ENCODE measurements at regions of chr7 and their contacts with region 1.

Region 1: DNA sequence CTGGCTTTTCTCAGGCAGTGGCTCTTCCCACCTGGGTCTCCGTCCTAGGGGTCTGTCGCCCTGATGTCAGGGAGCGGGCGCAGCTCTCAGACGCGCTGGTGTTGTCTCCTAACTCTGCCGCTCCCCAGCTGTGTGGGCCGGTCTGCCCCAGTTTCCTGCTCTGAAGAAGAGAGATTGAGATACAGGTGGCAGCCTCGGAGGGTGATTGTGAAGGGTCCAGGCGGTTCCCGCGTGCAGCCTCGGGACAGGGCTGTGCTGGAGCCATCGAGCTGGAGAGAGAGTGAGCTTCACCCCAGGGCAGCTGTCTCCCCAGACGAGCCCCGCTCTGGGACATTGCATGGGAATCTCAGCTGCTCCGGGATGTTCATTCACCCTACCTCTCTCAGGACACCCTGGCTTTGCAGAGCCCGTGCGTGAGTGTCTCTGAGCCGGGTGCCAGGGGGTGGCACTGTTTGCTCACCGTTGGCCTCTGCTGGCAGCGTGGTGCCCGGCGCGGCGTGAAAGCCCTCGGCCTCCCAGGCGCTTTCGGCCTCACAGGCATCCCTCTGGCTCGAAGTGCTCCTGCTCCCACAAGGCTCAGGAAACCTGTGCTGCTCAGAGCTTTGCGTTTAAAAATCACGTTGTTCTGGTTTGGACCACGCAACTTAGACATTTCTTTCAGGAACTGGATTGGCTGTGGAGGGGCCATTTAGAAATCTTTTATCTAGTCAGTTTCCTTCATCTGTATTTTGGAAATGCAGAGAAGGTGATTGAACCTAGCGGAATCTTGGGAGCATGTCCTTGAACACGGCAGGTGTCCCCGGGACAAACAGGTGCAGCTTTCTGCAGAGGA is 33.8 kb upstream of the ZFAND2A start:
- DNase-seq: peak; percentile 39
- H3K4me3 ChIP-seq: no peak overlapping the region
- H3K27ac ChIP-seq: no peak overlapping the region
- H3K4me1 ChIP-seq: no peaks in the 10 kb centered on the region
- H3K27me3 ChIP-seq: no peaks in the 10 kb centered on the region
- CTCF ChIP-seq: peak; percentile 48 to 85

Region 2: DNA sequence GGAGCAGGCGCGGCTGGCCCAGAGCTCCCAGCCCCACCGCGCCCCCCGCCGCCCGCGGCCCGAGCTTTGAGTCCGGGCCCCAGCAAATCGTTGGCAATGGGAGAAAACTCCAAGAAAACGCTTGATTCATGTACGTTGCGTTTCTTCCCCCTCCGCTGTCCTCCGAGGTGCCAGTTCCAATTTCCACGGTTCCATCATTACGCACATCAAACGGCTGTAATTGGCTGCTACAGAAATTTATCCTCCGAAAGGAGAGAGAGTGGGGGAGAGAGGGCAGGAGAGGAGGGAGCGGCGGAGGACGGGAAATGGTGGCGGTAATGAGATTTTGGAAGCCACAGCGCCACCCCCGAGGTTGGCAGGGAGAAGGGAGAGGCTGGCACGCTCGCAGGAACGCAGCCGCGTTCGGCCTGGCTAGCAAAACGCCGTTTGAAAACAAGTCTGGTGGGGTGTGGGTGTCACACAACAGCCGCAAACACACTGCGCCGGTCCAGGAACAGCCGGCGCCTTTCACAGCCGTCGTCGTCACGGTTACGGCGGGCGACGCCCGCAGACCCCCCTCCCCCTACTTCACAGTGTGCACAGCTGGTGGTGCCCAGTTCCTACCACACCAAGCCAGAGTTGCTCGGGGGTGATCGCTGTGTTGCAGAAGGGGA is 96.3 kb after region 1 on chr7:
- CTCF ChIA-PET with region 1: no interaction called
- dilution Hi-C with region 1: no loop called
- in situ Hi-C with region 1: no loop called
- intact Hi-C with region 1: no loop called
- DNase-seq: no peak
- H3K4me3 ChIP-seq: peak overlapping the region in 2 of 3 experiments; percentile 17 to 21
- H3K27ac ChIP-seq: no peak overlapping the region
- H3K4me1 ChIP-seq: peaks cover 4% of the 10 kb centered on the region
- H3K27me3 ChIP-seq: peaks cover 6% of the 10 kb centered on the region
- CTCF ChIP-seq: peak in 1 of 2 donors; percentile 8

Region 3: DNA sequence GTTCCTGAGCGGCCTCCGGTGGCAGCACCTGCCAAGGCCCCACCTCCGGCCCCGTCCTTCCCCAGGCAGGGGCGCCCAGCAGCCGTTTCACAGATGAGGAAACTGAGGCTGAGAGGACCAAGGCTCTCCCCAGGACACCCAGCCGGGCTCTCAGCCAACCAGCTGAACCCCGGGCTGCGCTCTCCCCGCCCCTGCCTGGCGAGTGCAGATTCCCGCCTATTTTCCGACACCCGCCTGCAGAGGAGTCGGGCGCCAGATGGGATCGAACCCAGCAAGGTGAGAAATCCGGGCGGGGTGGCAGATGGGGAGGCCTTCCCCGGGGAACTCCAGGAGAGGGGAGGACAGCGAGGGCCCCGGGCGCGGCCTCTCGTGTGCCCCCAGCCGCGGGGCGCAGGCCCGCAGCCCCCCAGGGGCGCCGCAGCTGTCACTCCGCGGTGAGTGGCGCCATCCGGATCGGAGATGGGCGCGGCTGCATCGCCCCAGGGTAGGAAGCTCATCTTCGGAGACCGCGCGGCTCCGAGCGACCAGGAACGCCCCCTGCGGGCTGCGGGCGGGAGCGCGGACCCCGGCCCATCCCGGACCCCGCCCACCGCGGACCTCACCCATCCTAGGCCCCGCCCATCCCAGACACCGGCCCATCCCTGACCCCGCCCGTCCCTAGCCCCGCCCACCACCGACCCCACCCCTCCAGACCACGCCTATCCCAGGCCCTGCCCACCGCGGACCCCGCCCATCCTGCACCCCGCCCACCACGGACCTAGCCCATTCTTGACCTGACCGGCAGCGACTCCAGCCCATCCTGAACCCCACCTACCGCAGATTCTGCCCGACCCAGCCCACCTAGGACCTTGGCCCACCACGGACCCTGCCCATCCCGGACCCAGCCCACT is 175.1 kb after region 1 on chr7:
- CTCF ChIA-PET with region 1: no interaction called
- dilution Hi-C with region 1: no loop called
- in situ Hi-C with region 1: no loop called
- intact Hi-C with region 1: no loop called
- DNase-seq: no peak
- H3K4me3 ChIP-seq: no peak overlapping the region
- H3K27ac ChIP-seq: no peak overlapping the region
- H3K4me1 ChIP-seq: peaks cover 3% of the 10 kb centered on the region
- H3K27me3 ChIP-seq: peaks cover 11% of the 10 kb centered on the region
- CTCF ChIP-seq: no peak

Region 4: DNA sequence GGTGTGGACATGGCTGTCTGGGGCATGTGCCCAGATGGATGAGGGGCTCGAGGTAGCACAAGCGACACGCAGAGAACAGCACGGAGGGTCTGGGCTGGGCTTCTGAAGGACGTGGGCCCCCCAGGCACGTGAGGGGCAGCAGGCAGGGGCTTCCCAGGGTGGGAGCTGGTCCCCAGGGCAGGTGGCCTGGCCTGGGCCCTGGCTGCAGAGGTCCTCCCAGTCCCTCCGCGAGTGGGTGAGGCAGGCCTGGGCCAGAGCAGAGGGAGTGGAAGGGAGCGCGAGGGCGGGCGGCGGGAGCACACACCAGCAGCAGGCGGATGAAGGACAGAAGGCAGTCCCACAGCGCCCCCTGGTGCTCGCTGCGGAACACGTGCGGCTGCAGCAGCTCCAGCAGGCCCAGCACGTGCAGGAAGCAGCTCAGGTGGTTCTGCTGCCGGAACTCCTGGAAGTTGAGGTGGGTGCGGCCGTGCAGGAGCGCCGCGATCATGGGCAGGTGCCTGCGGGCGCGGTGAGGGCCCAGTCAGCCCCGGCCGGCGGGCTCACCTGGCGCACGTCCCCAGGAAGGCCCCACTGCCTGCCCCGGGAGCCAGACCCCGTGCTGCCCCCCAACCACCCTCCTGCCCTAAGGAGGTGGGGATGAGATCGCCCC is 280.2 kb after region 1 on chr7:
- CTCF ChIA-PET with region 1: no interaction called
- dilution Hi-C with region 1: no loop called
- in situ Hi-C with region 1: loop called in 1 of 2 experiments (anchors 25 kb)
- intact Hi-C with region 1: loop called (anchors 1 kb)
- DNase-seq: peak; percentile 79
- H3K4me3 ChIP-seq: no peak overlapping the region
- H3K27ac ChIP-seq: no peak overlapping the region
- H3K4me1 ChIP-seq: peaks cover 8% of the 10 kb centered on the region
- H3K27me3 ChIP-seq: no peaks in the 10 kb centered on the region
- CTCF ChIP-seq: peak; percentile 73 to 92

Measured in mammary epithelial cell (primary cell).